Naive thymus-derived CD4-positive, alpha-beta T cell (primary cell): ENCODE measurements at regions of chr6 and their contacts with region 1.

Region 1: GRCh38 chr6:127855542-127856159 is 45.2 kb downstream of the THEMIS start:
- DNase-seq: peak in 7 of 9 donors; percentile 34 to 66 (median 49)
- ATAC-seq: peak; percentile 64
- H3K4me3 ChIP-seq: no peak overlapping the region
- H3K4me3 Mint-ChIP-seq: peak overlapping the region in 9 of 10 donors; percentile 8 to 70 (median 48)
- H3K27ac ChIP-seq: no peak overlapping the region
- H3K27ac Mint-ChIP-seq: peak overlapping the region; percentile 1 to 85 (median 76)
- H3K4me1 ChIP-seq: peaks cover 43 to 45% of the 10 kb centered on the region in 2 donors
- H3K4me1 Mint-ChIP-seq: peaks cover 43 to 94% (median 87%) of the 10 kb centered on the region in 7 donors
- H3K27me3 ChIP-seq: no peaks in the 10 kb centered on the region
- H3K27me3 Mint-ChIP-seq: no peaks in the 10 kb centered on the region

Region 2: GRCh38 chr6:127900935-127901334 is 45.3 kb after region 1 on chr6 and contains the start of gene THEMIS:
- CTCF ChIA-PET with region 1: interaction called, 4 read pairs
- POLR2A ChIA-PET with region 1: interaction called, 9 read pairs
- intact Hi-C with region 1: loop called (anchors 2 kb)
- DNase-seq: peak; percentile 9 to 80 (median 73)
- ATAC-seq: peak; percentile 85
- H3K4me3 ChIP-seq: peak within 1 kb of the TSS; percentile 77
- H3K4me3 Mint-ChIP-seq: peak within 1 kb of the TSS; percentile 92 to 100 (median 98)
- H3K27ac ChIP-seq: peak within 1 kb of the TSS; percentile 77
- H3K27ac Mint-ChIP-seq: peak within 1 kb of the TSS; percentile 88 to 100 (median 95)
- H3K4me1 ChIP-seq: peaks cover 8 to 38% of the 10 kb centered on the region in 2 donors
- H3K4me1 Mint-ChIP-seq: peaks cover 22 to 72% (median 56%) of the 10 kb centered on the region in 7 donors
- H3K27me3 ChIP-seq: no peaks in the 10 kb centered on the region
- H3K27me3 Mint-ChIP-seq: no peaks in the 10 kb centered on the region
- total RNA-seq, gene THEMIS: 51.3 to 97.3 (median 54.7) TPM

Region 3: GRCh38 chr6:127971945-127972391 is 116.3 kb after region 1 on chr6:
- CTCF ChIA-PET with region 1: interaction called, 17 read pairs
- POLR2A ChIA-PET with region 1: interaction called, 3 read pairs
- intact Hi-C with region 1: loop called (anchors 1 to 2 kb)
- DNase-seq: peak; percentile 9 to 89 (median 84)
- ATAC-seq: peak; percentile 92
- H3K4me3 ChIP-seq: peak overlapping the region; percentile 43
- H3K4me3 Mint-ChIP-seq: peak overlapping the region; percentile 73 to 96 (median 88)
- H3K27ac ChIP-seq: peak overlapping the region; percentile 83
- H3K27ac Mint-ChIP-seq: peak overlapping the region; percentile 71 to 99 (median 97)
- H3K4me1 ChIP-seq: peaks cover 36 to 49% of the 10 kb centered on the region in 2 donors
- H3K4me1 Mint-ChIP-seq: peaks cover 15 to 83% (median 68%) of the 10 kb centered on the region in 7 donors
- H3K27me3 ChIP-seq: no peaks in the 10 kb centered on the region
- H3K27me3 Mint-ChIP-seq: no peaks in the 10 kb centered on the region

Region 4: DNA sequence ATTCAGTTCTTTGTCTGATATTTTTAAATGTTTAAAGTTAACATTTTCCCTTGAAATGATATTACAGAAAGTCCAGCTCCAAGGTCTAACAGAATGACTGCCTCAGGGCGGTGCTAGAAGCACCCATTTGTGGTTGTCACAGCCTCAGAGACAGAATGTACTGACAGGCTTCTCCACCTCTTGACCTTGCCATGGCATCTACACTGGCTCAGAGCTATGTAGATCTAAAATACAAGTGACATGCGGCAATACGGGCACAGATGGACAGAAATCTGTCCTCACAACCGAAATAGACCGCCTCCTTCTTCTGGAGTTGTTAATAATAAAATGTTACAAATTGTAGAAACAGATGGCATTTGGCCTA is 212.4 kb after region 1 on chr6:
- CTCF ChIA-PET with region 1: no interaction called
- POLR2A ChIA-PET with region 1: no interaction called
- intact Hi-C with region 1: no loop called
- DNase-seq: no peak
- ATAC-seq: no peak
- H3K4me3 ChIP-seq: no peak overlapping the region
- H3K4me3 Mint-ChIP-seq: no peak overlapping the region
- H3K27ac ChIP-seq: no peak overlapping the region
- H3K27ac Mint-ChIP-seq: no peak overlapping the region
- H3K4me1 ChIP-seq: no peaks in the 10 kb centered on the region
- H3K4me1 Mint-ChIP-seq: peaks cover 0 to 4% (median 0%) of the 10 kb centered on the region in 7 donors
- H3K27me3 ChIP-seq: no peaks in the 10 kb centered on the region
- H3K27me3 Mint-ChIP-seq: no peaks in the 10 kb centered on the region

Region 5: GRCh38 chr6:128240024-128240428 is 384.4 kb after region 1 on chr6:
- CTCF ChIA-PET with region 1: no interaction called
- POLR2A ChIA-PET with region 1: no interaction called
- intact Hi-C with region 1: loop called in 1 of 2 experiments (anchors 5 kb)
- DNase-seq: peak in 4 of 9 donors; percentile 5 to 11 (median 8)
- ATAC-seq: peak; percentile 56
- H3K4me3 ChIP-seq: no peak overlapping the region
- H3K4me3 Mint-ChIP-seq: peak overlapping the region in 8 of 10 donors; percentile 34 to 65 (median 55)
- H3K27ac ChIP-seq: no peak overlapping the region
- H3K27ac Mint-ChIP-seq: peak overlapping the region in 7 of 9 donors; percentile 0 to 47 (median 20)
- H3K4me1 ChIP-seq: no peaks in the 10 kb centered on the region
- H3K4me1 Mint-ChIP-seq: peaks cover 0 to 24% (median 16%) of the 10 kb centered on the region in 7 donors
- H3K27me3 ChIP-seq: no peaks in the 10 kb centered on the region
- H3K27me3 Mint-ChIP-seq: no peaks in the 10 kb centered on the region

Region 6: DNA sequence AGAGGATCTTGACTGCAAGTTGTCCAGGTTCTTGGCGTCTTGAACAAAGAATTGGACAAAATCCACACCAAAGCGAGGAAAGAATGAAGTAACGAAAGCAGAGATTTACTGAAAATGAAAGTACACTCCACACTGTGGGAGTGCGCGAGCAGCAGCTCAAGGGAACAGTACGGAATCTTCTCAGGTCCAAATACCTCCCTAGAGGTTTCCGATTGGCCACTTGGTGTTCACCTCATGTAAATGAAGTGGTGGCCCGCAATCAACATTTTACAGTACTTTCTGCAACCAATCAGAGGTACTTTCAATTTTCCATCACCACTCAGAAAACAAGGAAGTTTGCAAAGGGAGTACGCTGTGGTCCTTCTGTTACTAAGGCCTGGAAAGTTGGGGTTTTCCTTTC is 542.3 kb after region 1 on chr6:
- CTCF ChIA-PET with region 1: no interaction called
- POLR2A ChIA-PET with region 1: no interaction called
- intact Hi-C with region 1: loop called in 1 of 2 experiments (anchors 10 kb)
- DNase-seq: no peak
- ATAC-seq: no peak
- H3K4me3 ChIP-seq: no peak overlapping the region
- H3K4me3 Mint-ChIP-seq: no peak overlapping the region
- H3K27ac ChIP-seq: no peak overlapping the region
- H3K27ac Mint-ChIP-seq: no peak overlapping the region
- H3K4me1 ChIP-seq: no peaks in the 10 kb centered on the region
- H3K4me1 Mint-ChIP-seq: no peaks in the 10 kb centered on the region
- H3K27me3 ChIP-seq: no peaks in the 10 kb centered on the region
- H3K27me3 Mint-ChIP-seq: peaks cover 0 to 3% (median 0%) of the 10 kb centered on the region in 5 donors

Region 7: DNA sequence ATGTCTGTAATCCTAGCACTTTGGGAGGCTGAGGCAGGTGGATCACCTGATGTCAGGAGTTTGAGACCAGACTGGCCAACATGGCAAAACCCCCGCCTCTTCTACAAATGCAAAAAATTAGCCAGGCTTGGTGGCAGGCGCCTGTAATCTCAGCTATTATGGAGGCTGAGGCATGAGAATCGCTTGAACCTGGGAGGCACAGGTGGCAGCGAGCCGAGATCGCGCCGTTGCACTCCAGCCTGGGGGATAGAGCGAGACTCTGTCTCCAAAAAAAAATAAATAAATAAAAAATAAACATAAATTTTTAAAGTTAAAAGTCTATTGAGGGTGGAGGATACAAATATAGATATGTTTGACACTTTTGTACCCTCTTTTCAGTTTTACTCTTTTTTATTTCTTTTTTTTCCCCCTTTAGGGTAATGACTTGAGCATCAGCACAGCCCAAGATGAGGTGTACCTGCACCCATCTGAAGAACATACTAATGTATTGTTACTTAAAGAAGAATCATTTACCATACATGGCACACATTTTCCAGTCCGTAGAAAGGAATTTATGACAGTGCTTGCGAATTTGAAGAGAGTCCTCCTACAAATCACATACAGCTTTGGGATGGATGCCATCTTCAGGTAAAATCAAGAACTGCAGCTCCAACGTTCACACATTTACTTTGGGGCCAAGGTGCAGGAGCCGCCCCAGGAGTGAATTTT is 1396.2 kb after region 1 on chr6:
- CTCF ChIA-PET with region 1: interaction called, 3 read pairs
- POLR2A ChIA-PET with region 1: no interaction called
- intact Hi-C with region 1: loop called in 1 of 2 experiments (anchors 5 kb)
- DNase-seq: peak in 7 of 9 donors; percentile 1 to 35 (median 25)
- ATAC-seq: peak; percentile 59
- H3K4me3 ChIP-seq: no peak overlapping the region
- H3K4me3 Mint-ChIP-seq: no peak overlapping the region
- H3K27ac ChIP-seq: no peak overlapping the region
- H3K27ac Mint-ChIP-seq: no peak overlapping the region
- H3K4me1 ChIP-seq: no peaks in the 10 kb centered on the region
- H3K4me1 Mint-ChIP-seq: peaks cover 0 to 8% (median 0%) of the 10 kb centered on the region in 7 donors
- H3K27me3 ChIP-seq: no peaks in the 10 kb centered on the region
- H3K27me3 Mint-ChIP-seq: peaks cover 11 to 43% (median 29%) of the 10 kb centered on the region in 5 donors